Activated CD8-positive, alpha-beta T cell treated with anti-CD3 and anti-CD28 coated beads, Interleukin-2, amount 10 ng/mL, durations not matched to agents 7 days and 5 days (primary cell): ENCODE measurements at regions of chr16 and their contacts with region 1.

Region 1: DNA sequence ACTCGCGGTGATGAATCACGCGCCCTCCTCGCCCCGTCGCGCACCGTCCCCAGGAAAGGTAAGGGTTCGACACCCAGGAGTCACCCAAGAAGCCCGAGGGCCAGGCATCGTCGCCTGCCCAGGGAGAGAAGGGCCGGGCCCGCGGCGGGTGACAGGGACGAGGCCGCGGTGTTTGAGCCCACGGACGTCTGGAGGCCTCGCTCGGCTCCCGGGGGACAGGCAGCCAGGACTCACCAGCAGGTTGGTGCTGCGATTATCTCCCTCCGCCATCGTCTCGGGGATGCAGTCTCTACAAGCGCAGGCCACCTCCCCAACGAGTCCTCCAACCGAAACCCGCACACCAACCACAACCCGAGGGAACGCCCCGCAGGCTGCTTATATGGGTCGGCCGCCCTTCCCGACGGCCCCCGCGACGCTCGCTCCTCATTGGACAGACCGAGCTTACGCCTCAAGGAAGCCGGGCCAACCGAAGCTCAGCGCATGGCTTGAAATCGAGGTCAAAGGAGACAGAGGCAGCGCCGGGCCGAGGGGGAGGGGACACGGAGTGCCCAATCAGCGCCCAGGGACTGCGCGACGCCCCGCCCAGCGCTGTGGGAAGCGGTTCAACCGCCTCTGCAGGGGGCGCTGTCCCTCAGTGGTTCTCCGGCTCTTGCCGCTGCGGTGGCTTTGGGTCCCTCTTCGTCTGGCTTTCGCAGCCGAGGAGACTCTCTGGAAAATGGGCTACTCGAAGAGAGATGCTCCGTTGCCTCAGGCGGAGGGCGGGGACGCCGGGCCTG is at the start of gene ARL6IP1:
- DNase-seq: peak; percentile 99
- ATAC-seq: peak; percentile 96
- H3K4me3 Mint-ChIP-seq: peak within 1 kb of the TSS; percentile 89
- H3K27ac Mint-ChIP-seq: peak within 1 kb of the TSS; percentile 98
- H3K4me1 Mint-ChIP-seq: peaks cover 75% of the 10 kb centered on the region
- H3K27me3 Mint-ChIP-seq: no peaks in the 10 kb centered on the region
- total RNA-seq, gene ARL6IP1: 234 to 240 TPM

Region 2: DNA sequence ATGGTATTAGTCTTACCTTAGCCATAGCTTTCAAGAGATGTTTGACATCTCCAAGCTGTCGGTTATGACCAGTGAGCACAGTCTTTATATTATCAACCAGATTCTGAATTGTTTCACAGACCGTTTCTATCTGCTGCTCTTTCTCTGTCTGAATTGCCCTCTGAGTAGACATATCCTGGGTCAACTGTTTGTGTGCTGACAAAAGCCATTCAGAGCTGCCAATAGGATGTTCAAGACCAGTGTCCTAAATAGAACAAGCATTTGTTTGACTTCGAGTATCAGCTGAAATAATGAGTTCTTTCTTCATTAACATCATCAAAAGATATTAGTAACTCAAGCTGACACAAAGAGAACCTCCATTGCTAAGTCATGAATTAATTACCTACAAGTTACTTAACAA is 14.9 kb after region 1 on chr16:
- CTCF ChIA-PET with region 1: interaction called, 124 read pairs
- POLR2A ChIA-PET with region 1: interaction called, 16 read pairs
- DNase-seq: no peak
- ATAC-seq: no peak
- H3K4me3 Mint-ChIP-seq: no peak overlapping the region
- H3K27ac Mint-ChIP-seq: no peak overlapping the region
- H3K4me1 Mint-ChIP-seq: peaks cover 14% of the 10 kb centered on the region
- H3K27me3 Mint-ChIP-seq: no peaks in the 10 kb centered on the region

Region 3: DNA sequence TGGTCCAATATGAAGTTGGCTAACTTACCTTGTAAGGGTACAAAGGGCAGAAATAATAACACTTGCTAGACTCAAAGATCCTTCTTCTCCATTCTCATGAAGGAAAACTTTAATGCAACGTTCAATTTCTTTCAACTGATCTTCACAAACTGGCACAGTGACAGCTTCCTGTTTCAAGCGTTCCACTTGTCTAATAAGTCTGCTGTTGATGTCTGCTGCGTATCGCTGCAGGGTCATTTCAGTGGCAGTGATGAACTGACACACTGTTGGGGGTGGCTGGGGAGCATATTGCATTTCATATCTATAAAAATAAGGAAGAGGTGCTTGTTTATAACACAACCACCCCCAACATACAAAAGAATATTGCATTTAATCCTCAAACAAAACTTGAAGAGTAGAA is 33.5 kb after region 1 on chr16:
- CTCF ChIA-PET with region 1: interaction called, 19 read pairs
- POLR2A ChIA-PET with region 1: interaction called, 8 read pairs
- DNase-seq: no peak
- ATAC-seq: no peak
- H3K4me3 Mint-ChIP-seq: no peak overlapping the region
- H3K27ac Mint-ChIP-seq: no peak overlapping the region
- H3K4me1 Mint-ChIP-seq: no peaks in the 10 kb centered on the region
- H3K27me3 Mint-ChIP-seq: no peaks in the 10 kb centered on the region

Region 4: DNA sequence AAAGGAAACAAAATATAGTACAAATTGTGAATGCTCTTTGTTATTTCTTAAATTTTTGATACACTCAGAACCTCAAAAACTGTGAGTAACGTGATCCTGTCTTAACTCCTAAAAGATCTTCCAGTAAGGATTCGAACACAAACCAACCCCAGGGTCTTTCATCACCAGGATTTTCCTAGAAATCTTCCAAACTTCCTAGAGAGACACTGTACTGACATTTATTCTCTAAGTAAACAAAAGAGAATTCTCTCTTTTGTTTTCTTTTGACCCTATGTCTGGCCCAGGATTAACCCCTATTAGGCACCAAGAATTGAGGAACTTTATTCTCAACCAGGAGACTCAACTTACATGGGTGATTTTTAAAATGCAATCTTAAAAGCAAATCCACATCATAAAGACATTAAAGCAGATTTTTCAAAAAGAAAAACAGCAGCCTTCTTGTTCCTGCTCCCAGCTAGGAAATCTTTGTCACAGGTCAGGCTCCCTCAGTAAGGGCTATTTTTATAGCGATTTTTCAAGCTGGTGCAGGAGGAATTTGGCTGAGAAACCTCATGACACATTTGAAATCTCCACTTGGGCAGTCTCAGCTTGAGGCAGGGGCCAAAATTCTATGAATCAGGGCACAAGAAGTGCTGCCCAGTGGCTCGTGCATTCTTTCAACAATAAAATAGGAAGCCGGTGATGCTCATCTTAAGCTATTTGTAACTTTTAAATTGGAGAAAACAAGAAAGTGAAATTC is 131.0 kb after region 1 on chr16:
- CTCF ChIA-PET with region 1: interaction called, 11 read pairs
- POLR2A ChIA-PET with region 1: no interaction called
- DNase-seq: no peak
- ATAC-seq: no peak
- H3K4me3 Mint-ChIP-seq: no peak overlapping the region
- H3K27ac Mint-ChIP-seq: no peak overlapping the region
- H3K4me1 Mint-ChIP-seq: peaks cover 14% of the 10 kb centered on the region
- H3K27me3 Mint-ChIP-seq: no peaks in the 10 kb centered on the region